T-cell (primary cell): ENCODE measurements at regions of chr4 and their contacts with region 1.

Region 1: DNA sequence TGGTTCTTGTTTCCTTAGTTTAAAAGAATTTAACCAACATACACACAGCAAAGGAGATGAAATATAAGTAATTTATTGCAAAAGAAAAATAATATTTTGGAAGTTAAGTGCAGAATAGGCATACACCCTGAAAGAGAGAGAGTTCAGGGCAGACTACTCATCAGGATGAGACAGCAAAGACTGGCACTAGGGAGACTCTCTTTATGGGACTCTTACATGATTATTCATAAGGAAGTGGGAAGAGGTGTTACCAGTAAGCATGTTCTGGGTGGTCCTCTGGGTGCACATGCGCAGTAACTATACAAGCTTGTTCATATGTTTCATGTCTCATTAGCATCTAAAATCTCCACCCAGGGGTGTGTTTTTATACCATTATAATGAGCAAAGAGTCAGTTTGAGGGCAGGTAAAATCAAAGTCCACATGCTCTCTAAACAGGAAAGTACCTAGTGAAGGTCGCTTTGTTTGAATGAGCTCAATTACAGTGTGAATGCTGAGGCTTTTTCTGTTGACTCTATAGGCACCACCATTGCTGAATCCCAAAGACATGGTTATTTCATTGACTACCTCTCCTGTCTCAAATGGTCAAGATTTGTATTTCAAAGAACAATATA is 38.2 kb upstream of the PRDM5 start:
- DNase-seq: no peak
- ATAC-seq: no peak
- H3K4me3 ChIP-seq: no peak overlapping the region
- H3K4me3 Mint-ChIP-seq: no peak overlapping the region
- H3K27ac ChIP-seq: no peak overlapping the region
- H3K27ac Mint-ChIP-seq: no peak overlapping the region
- H3K4me1 ChIP-seq: no peaks in the 10 kb centered on the region
- H3K4me1 Mint-ChIP-seq: no peaks in the 10 kb centered on the region
- H3K27me3 ChIP-seq: no peaks in the 10 kb centered on the region
- H3K27me3 Mint-ChIP-seq: peaks cover 0 to 8% of the 10 kb centered on the region in 2 donors

Region 2: DNA sequence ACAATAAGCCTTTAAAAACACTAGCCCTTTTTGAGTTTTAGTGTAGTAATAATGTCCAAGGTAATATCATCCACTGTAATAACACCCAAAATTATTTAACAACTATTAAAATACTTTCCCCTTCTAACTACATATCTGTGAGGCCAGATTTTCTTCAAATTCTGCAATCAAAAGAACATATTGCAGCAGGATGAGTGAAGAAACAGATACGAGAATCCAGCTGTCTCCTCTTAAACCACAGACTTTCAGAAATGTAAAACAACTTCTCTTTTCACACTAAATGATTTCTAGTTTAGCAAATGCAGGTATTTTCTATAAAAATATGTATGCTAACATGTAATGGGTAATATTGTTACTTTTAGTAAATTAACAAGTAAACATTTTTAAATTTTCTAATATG is 187.1 kb before region 1 on chr4:
- CTCF ChIA-PET with region 1: no interaction called
- POLR2A ChIA-PET with region 1: interaction called in 1 of 2 experiments, 13 read pairs
- DNase-seq: no peak
- ATAC-seq: no peak
- H3K4me3 ChIP-seq: no peak overlapping the region
- H3K4me3 Mint-ChIP-seq: no peak overlapping the region
- H3K27ac ChIP-seq: no peak overlapping the region
- H3K27ac Mint-ChIP-seq: no peak overlapping the region
- H3K4me1 ChIP-seq: no peaks in the 10 kb centered on the region
- H3K4me1 Mint-ChIP-seq: no peaks in the 10 kb centered on the region
- H3K27me3 ChIP-seq: no peaks in the 10 kb centered on the region
- H3K27me3 Mint-ChIP-seq: no peaks in the 10 kb centered on the region

Region 3: DNA sequence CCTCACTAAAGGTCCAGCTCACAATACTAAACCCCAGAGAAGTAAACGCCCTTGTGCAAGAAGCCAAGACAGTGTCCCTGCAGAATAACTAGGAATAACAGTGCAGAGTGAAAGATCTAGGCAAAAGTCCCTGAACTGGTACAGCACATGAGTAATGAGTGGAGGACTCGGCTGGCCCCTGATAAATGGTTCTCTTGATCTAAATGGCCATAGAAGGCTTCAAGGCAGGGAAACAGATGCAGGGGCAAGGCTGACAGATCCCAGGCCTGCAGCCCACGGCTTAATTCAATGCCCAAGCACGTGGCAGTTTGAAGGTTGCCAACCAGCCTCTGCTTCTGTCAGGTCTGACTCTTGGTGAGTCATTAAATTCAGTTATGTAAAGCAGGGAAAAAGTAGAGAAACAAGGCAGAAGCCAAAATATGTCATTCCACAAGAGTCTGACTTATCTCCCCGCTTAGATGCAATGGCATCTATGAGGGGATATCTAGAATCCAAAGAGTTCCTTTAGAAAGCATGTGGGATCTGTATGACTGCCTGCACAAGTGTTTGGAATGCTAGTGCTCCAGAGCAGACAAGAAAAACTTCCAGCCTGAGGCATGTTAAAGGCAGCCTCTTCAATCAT is 159.5 kb before region 1 on chr4:
- CTCF ChIA-PET with region 1: no interaction called
- POLR2A ChIA-PET with region 1: no interaction called
- DNase-seq: no peak
- ATAC-seq: no peak
- H3K4me3 ChIP-seq: no peak overlapping the region
- H3K4me3 Mint-ChIP-seq: no peak overlapping the region
- H3K27ac ChIP-seq: no peak overlapping the region
- H3K27ac Mint-ChIP-seq: no peak overlapping the region
- H3K4me1 ChIP-seq: no peaks in the 10 kb centered on the region
- H3K4me1 Mint-ChIP-seq: no peaks in the 10 kb centered on the region
- H3K27me3 ChIP-seq: no peaks in the 10 kb centered on the region
- H3K27me3 Mint-ChIP-seq: peaks cover 0 to 6% of the 10 kb centered on the region in 2 donors

Region 4: DNA sequence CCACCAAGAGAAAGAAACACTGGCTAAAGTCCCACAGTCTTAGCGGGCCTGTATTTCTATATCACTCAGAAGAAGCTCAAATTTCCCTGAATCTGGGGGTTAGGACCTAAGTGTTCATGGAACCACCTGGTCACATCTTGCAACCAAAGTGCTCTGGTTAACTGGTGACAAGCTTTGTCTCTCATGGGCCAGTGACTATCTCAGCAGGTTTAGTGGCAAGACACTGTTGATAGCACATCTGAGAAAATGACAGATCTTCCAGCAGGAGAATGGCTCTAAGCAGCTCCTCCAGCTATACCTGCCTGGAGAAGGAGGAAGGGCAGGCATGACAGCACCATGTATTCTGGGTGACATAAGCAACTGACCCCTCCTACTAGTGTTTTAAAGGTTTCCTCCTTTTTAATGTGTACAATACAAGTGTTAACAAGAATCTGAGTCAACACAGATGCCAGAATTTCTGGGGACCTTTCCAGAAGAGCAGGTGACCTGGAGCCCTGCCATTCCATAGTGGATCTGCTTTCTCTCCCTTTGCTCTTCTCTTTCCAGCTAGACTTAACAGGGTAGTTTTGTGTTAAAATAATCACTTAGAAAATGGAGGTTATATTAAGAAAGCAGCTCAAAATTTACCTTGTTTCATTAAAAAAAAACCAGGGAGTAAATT is 437.3 kb after region 1 on chr4:
- CTCF ChIA-PET with region 1: no interaction called
- POLR2A ChIA-PET with region 1: no interaction called
- DNase-seq: no peak
- ATAC-seq: no peak
- H3K4me3 ChIP-seq: no peak overlapping the region
- H3K4me3 Mint-ChIP-seq: no peak overlapping the region
- H3K27ac ChIP-seq: no peak overlapping the region
- H3K27ac Mint-ChIP-seq: no peak overlapping the region
- H3K4me1 ChIP-seq: no peaks in the 10 kb centered on the region
- H3K4me1 Mint-ChIP-seq: no peaks in the 10 kb centered on the region
- H3K27me3 ChIP-seq: peaks cover 0 to 3% of the 10 kb centered on the region in 2 experiments
- H3K27me3 Mint-ChIP-seq: peaks cover 0 to 2% of the 10 kb centered on the region in 2 donors